ENCODE measurements at regions of chr2 and their contacts with region 1.

Region 1: GRCh38 chr2:241102239-241102803 is at the start of gene MTERF4:
- DNase-seq: peak; percentile 76 to 88
- ATAC-seq: peak; percentile 88 to 94
- H3K4me3 ChIP-seq: peak within 1 kb of the TSS; percentile 89 to 99 (median 94)
- H3K27ac ChIP-seq: peak within 1 kb of the TSS; percentile 85 to 90 (median 88)
- H3K4me1 ChIP-seq: peaks cover 27 to 28% of the 10 kb centered on the region in 2 donors
- H3K27me3 ChIP-seq: no peaks in the 10 kb centered on the region
- CTCF ChIP-seq: no peak
- POLR2A ChIP-seq: peak; percentile 71 to 73
- total RNA-seq, gene MTERF4: 21.8 to 49.3 (median 37.0) TPM

Region 2: GRCh38 chr2:240435457-240435947 is 666.8 kb before region 1 on chr2 and contains the start of gene GPC1:
- in situ Hi-C with region 1: no loop called
- intact Hi-C with region 1: no loop called
- DNase-seq: peak; percentile 45 to 71
- ATAC-seq: peak; percentile 62 to 68
- H3K4me3 ChIP-seq: peak within 1 kb of the TSS; percentile 56 to 91 (median 59)
- H3K27ac ChIP-seq: peak within 1 kb of the TSS; percentile 84 to 97 (median 93)
- H3K4me1 ChIP-seq: peaks cover 35 to 41% of the 10 kb centered on the region in 2 donors
- H3K27me3 ChIP-seq: no peaks in the 10 kb centered on the region
- CTCF ChIP-seq: peak in 1 of 5 experiments; percentile 4
- POLR2A ChIP-seq: peak; percentile 86 to 89
- total RNA-seq, gene GPC1: 112 to 188 (median 180) TPM

Region 3: GRCh38 chr2:240913810-240914644 is 188.3 kb before region 1 on chr2:
- in situ Hi-C with region 1: no loop called
- intact Hi-C with region 1: loop called (anchors 10 kb)
- DNase-seq: peak in 1 of 2 donors; percentile 39
- ATAC-seq: peak; percentile 31 to 59
- H3K4me3 ChIP-seq: peak overlapping the region in 1 of 4 donors; percentile 5
- H3K27ac ChIP-seq: no peak overlapping the region
- H3K4me1 ChIP-seq: peaks cover 3 to 6% of the 10 kb centered on the region in 2 donors
- H3K27me3 ChIP-seq: peaks cover 5 to 13% (median 8%) of the 10 kb centered on the region in 3 donors
- CTCF ChIP-seq: peak; percentile 63 to 92 (median 88)
- POLR2A ChIP-seq: no peak

Region 4: DNA sequence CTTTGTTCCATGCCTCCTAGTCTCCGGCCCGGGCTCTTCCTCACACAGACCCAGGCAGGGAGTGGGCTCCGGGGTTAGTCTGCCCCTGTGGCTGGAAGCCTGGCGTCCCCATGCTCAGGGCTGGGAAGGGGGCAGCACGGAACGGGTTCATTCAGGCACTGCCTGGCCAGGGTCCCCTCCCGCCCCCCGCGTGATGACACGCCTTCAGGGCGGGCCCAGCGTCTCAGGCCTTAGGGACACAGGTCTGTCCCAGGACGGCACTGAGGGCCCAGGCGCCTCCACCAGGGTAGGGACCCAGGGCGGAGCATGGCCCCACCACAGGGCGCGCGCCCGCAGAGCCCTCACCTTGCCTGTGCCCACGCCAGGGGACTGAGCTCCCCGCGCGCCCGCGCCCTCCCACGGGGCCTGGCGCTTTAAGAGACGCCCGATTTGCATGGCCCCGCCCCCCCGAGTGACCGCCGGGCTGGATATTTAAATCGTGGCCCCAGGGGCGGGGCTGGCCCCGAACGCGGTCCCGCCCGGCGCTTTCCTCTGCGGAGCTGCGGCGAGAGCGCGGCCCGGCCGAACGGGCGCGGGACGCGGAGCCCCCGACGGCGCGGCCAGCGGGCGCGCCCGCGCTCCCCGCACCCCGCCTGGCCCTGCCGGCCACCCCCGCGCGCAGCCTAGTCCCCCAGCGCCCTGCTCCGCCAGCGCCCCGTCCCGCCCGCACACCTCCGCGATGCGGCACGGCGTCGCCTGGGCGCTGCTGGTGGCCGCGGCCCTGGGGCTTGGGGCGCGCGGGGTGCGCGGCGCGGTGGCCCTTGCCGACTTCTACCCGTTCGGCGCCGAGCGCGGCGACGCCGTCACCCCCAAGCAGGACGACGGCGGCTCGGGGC is 104.0 kb before region 1 on chr2 and contains the start of gene SNED1:
- in situ Hi-C with region 1: no loop called
- intact Hi-C with region 1: loop called (anchors 5 kb)
- DNase-seq: peak; percentile 87 to 89
- ATAC-seq: peak; percentile 61 to 79
- H3K4me3 ChIP-seq: peak within 1 kb of the TSS; percentile 63 to 98 (median 73)
- H3K27ac ChIP-seq: peak within 1 kb of the TSS; percentile 95 to 99 (median 96)
- H3K4me1 ChIP-seq: peaks cover 41 to 51% of the 10 kb centered on the region in 2 donors
- H3K27me3 ChIP-seq: no peaks in the 10 kb centered on the region
- CTCF ChIP-seq: no peak
- POLR2A ChIP-seq: peak; percentile 92 to 98
- total RNA-seq, gene SNED1: 16.4 to 56.2 (median 43.5) TPM

Region 5: DNA sequence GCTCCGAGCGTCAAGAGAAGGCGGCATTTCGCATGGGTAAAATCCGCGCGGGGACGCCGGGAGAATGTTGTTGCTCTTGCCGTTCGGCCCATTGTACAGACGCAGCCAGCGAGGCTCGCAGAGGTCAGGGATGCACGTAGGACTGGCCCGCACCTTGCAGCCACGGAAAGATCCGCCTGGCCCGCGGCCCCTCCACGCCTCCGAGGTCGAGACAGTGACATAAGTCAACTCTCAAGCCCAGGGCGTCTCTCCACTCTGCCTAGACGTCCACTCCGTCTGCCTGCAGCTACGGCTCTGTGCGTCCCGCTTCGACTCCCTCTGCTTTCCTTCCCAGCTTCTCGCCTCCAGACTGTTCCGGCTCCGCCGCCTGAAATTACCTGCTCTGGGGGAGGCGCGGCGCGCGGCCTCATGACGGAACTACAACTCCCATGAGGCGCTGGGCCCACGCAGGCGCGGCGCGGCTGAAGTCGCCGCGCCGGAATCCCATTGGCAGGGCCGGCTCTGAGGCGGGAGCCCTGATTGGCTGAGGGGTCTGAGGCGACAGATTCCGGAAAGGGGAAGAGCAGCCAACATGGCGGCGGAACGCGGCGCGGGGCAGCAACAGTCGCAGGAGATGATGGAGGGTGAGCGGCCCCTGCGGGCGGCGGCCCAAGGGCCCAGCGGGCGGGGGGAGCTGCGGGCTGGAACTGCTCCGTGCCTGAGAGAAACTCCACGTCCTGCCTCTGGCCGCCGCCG is 47.8 kb after region 1 on chr2 and contains the start of gene PPP1R7:
- in situ Hi-C with region 1: no loop called
- intact Hi-C with region 1: loop called (anchors 2 kb)
- DNase-seq: peak; percentile 90 to 93
- ATAC-seq: peak; percentile 87 to 91
- H3K4me3 ChIP-seq: peak within 1 kb of the TSS; percentile 72 to 99 (median 83)
- H3K27ac ChIP-seq: peak within 1 kb of the TSS; percentile 78 to 93 (median 84)
- H3K4me1 ChIP-seq: peaks cover 13 to 15% of the 10 kb centered on the region in 2 donors
- H3K27me3 ChIP-seq: no peaks in the 10 kb centered on the region
- CTCF ChIP-seq: no peak
- POLR2A ChIP-seq: peak; percentile 78 to 82
- total RNA-seq, gene PPP1R7: 58.6 to 87.8 (median 67.2) TPM

Region 6: GRCh38 chr2:241226723-241227572 is 124.6 kb after region 1 on chr2:
- in situ Hi-C with region 1: no loop called
- intact Hi-C with region 1: no loop called
- DNase-seq: no peak
- ATAC-seq: no peak
- H3K4me3 ChIP-seq: no peak overlapping the region
- H3K27ac ChIP-seq: no peak overlapping the region
- H3K4me1 ChIP-seq: no peaks in the 10 kb centered on the region
- H3K27me3 ChIP-seq: no peaks in the 10 kb centered on the region
- CTCF ChIP-seq: no peak
- POLR2A ChIP-seq: no peak

Region 7: DNA sequence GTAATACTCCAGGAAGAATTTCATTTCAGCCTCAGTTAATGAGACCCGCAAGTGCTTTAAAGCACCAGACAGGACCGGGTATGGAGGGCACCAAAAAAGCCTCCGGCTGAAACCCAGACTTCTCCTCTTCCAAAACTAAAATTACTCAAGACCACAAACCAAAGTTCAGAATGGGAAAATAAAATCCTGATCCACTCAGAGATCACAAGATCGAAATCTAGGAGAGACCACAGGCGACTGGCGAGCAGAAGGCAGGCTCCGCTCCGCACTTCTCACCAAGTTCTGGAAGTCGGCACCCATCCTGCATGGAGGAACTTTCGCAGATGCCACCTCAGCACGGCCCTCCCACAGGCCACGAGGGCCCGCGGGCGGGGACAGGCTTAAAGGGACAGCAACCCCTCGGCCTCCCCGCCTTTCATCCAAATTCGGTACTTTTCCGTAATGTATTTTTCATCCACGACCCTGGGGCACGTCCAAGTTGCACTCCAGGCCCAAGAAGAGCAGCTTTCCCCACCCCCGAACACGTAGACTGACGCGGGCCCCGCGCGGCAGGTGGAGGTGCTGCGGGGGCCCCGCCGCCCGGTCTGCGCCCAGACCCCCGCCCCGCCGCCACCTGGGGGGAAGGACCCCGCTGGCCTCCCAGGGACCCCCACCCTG is 169.4 kb after region 1 on chr2:
- in situ Hi-C with region 1: no loop called
- intact Hi-C with region 1: loop called (anchors 5 kb)
- DNase-seq: peak; percentile 80 to 81
- ATAC-seq: peak; percentile 88 to 90
- H3K4me3 ChIP-seq: peak overlapping the region; percentile 67 to 93 (median 73)
- H3K27ac ChIP-seq: peak overlapping the region; percentile 83 to 97 (median 92)
- H3K4me1 ChIP-seq: peaks cover 42 to 43% of the 10 kb centered on the region in 2 donors
- H3K27me3 ChIP-seq: no peaks in the 10 kb centered on the region
- CTCF ChIP-seq: no peak
- POLR2A ChIP-seq: peak in 1 of 2 donors; percentile 46

Region 8: GRCh38 chr2:241914542-241914941 is 812.2 kb after region 1 on chr2:
- in situ Hi-C with region 1: no loop called
- intact Hi-C with region 1: no loop called
- DNase-seq: no peak
- ATAC-seq: no peak
- H3K4me3 ChIP-seq: no peak overlapping the region
- H3K27ac ChIP-seq: no peak overlapping the region
- H3K4me1 ChIP-seq: no peaks in the 10 kb centered on the region
- H3K27me3 ChIP-seq: no peaks in the 10 kb centered on the region
- CTCF ChIP-seq: no peak
- POLR2A ChIP-seq: no peak

Measured in gastrocnemius medialis (tissue), 4 donors.